CD8-positive, alpha-beta T cell (primary cell): ENCODE measurements at regions of chr4 and their contacts with region 1.

Region 1: GRCh38 chr4:56799824-56800756 is 21.4 kb downstream of the SPINK2 start:
- DNase-seq: peak; percentile 66 to 91 (median 82)
- ATAC-seq: peak; percentile 98
- H3K4me3 ChIP-seq: peak overlapping the region; percentile 53 to 78
- H3K4me3 Mint-ChIP-seq: peak overlapping the region; percentile 94
- H3K27ac ChIP-seq: peak overlapping the region; percentile 43 to 76
- H3K27ac Mint-ChIP-seq: peak overlapping the region; percentile 90
- H3K4me1 ChIP-seq: peaks cover 14% of the 10 kb centered on the region
- H3K4me1 Mint-ChIP-seq: peaks cover 23% of the 10 kb centered on the region
- H3K27me3 ChIP-seq: no peaks in the 10 kb centered on the region
- H3K27me3 Mint-ChIP-seq: no peaks in the 10 kb centered on the region
- CTCF ChIP-seq: peak; percentile 83

Region 2: DNA sequence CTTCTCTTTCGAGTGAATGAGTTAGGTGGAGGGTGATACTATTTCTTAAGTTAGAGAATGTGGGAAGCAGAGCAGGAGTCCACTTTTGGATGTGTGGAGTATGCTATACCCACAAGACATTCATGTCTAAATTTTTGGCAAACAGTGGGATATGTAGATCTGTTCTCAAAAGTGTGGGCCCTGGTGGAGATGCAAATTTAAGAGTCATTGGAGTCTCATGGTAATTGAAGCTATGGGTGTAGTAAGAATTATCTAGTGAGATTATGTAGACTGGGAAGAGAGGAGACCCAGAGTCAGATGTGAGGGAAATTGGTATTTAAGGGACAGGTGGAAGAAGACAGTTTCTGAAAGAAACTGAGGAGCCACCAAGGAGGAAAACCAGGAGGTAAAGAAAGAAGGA is 844.4 kb before region 1 on chr4:
- CTCF ChIA-PET with region 1: no interaction called
- POLR2A ChIA-PET with region 1: no interaction called
- intact Hi-C with region 1: no loop called
- DNase-seq: no peak
- ATAC-seq: no peak
- H3K4me3 ChIP-seq: no peak overlapping the region
- H3K4me3 Mint-ChIP-seq: no peak overlapping the region
- H3K27ac ChIP-seq: no peak overlapping the region
- H3K27ac Mint-ChIP-seq: peak overlapping the region; percentile 1
- H3K4me1 ChIP-seq: no peaks in the 10 kb centered on the region
- H3K4me1 Mint-ChIP-seq: peaks cover 11% of the 10 kb centered on the region
- H3K27me3 ChIP-seq: no peaks in the 10 kb centered on the region
- H3K27me3 Mint-ChIP-seq: no peaks in the 10 kb centered on the region
- CTCF ChIP-seq: no peak

Region 3: DNA sequence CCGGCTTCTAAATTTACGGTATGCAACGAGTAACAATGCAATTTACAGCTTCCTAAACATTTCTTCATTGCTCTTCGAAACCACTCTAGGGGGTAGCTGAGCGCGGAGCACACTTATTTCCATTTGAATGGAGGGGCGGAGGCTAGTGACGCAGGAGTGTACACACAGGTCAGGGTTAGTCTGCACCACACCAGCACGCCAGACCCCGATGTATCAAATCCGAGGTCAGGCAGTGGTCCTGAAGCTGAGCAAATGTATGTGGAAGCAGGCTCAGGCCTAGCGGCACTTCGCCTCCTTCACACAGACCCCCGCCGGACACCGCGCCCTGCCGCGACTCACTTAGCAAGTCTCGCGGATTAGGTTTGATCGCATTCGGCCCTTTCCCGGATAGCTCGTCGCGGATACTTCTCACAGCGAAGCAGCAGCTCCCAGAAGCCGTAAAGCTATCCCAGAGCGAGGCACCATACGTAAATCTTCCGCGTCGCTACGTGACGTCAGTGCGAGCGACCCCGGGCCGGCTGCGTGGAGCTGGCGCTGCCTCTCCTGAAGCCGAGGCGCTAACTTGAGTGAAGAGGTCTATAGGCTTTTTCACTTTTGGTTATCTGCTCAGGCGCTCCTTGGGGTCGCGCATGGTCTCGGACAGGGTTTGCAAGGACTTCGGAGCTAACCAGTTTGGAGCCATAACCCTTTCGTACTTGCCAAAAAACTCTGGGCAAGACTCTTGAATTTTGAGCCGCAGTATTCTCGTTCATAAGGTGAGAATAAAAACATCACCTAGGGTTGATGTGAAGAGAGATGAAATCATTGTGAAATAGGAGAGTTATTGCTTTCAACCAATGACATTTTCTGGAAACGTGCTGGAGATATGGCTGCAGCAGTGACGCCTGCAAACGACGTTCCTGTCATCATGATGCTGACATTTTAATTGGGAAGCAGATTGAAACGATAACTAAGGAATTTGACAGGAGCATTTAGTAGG is 412.8 kb before region 1 on chr4 and contains the start of gene AASDH:
- CTCF ChIA-PET with region 1: interaction called, 3 read pairs
- POLR2A ChIA-PET with region 1: no interaction called
- intact Hi-C with region 1: loop called in 1 of 2 experiments (anchors 1 kb)
- DNase-seq: peak; percentile 91 to 99 (median 96)
- ATAC-seq: peak; percentile 88
- H3K4me3 ChIP-seq: peak within 1 kb of the TSS; percentile 79 to 82
- H3K4me3 Mint-ChIP-seq: peak within 1 kb of the TSS; percentile 97
- H3K27ac ChIP-seq: peak within 1 kb of the TSS; percentile 93 to 94
- H3K27ac Mint-ChIP-seq: peak within 1 kb of the TSS; percentile 99
- H3K4me1 ChIP-seq: peaks cover 21% of the 10 kb centered on the region
- H3K4me1 Mint-ChIP-seq: peaks cover 46% of the 10 kb centered on the region
- H3K27me3 ChIP-seq: no peaks in the 10 kb centered on the region
- H3K27me3 Mint-ChIP-seq: no peaks in the 10 kb centered on the region
- CTCF ChIP-seq: no peak
- total RNA-seq, gene AASDH: 9.1 to 9.8 TPM

Region 4: GRCh38 chr4:56467284-56468096 is 332.6 kb before region 1 on chr4 and contains the start of gene SRP72:
- CTCF ChIA-PET with region 1: interaction called, 3 read pairs
- POLR2A ChIA-PET with region 1: no interaction called
- intact Hi-C with region 1: loop called in 1 of 2 experiments (anchors 1 kb)
- DNase-seq: peak; percentile 81 to 95 (median 90)
- ATAC-seq: peak; percentile 96
- H3K4me3 ChIP-seq: peak within 1 kb of the TSS; percentile 63 to 98
- H3K4me3 Mint-ChIP-seq: peak within 1 kb of the TSS; percentile 100
- H3K27ac ChIP-seq: peak within 1 kb of the TSS; percentile 69 to 92
- H3K27ac Mint-ChIP-seq: peak within 1 kb of the TSS; percentile 100
- H3K4me1 ChIP-seq: peaks cover 44% of the 10 kb centered on the region
- H3K4me1 Mint-ChIP-seq: peaks cover 60% of the 10 kb centered on the region
- H3K27me3 ChIP-seq: no peaks in the 10 kb centered on the region
- H3K27me3 Mint-ChIP-seq: no peaks in the 10 kb centered on the region
- CTCF ChIP-seq: no peak
- total RNA-seq, gene SRP72: 142 to 148 TPM

Region 5: DNA sequence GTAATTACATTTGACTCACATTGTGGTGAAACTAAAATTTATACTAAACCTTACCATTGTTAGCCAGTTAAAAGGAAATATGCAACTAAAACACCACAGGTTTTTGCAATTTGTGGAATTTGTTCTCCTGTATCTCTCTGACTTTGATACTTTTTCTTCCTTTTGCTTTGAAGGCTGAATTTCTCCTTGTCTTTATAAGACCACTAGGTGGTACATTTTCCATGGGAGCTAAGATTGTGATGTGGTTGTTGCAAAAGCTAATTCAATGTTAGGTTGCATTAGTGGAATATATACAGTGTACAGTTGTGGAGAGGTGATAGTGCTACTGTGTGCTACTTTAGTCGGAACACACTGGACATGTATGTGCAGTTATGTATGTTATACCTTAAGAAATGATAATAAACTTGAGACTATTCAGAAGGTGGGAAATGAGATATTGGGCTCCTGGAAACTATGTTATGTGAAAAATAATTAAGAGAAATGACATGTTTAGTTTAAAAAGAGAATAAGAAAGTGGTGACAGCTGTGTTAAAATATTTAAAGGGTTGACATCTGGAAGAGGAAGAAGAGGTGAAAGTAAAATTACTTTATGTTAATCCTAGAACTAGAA is 224.2 kb before region 1 on chr4:
- CTCF ChIA-PET with region 1: interaction called, 50 read pairs
- POLR2A ChIA-PET with region 1: interaction called, 4 read pairs
- intact Hi-C with region 1: loop called (anchors 1 kb)
- DNase-seq: peak in 2 of 9 experiments; percentile 35 to 52
- ATAC-seq: peak; percentile 36
- H3K4me3 ChIP-seq: no peak overlapping the region
- H3K4me3 Mint-ChIP-seq: no peak overlapping the region
- H3K27ac ChIP-seq: no peak overlapping the region
- H3K27ac Mint-ChIP-seq: no peak overlapping the region
- H3K4me1 ChIP-seq: no peaks in the 10 kb centered on the region
- H3K4me1 Mint-ChIP-seq: no peaks in the 10 kb centered on the region
- H3K27me3 ChIP-seq: no peaks in the 10 kb centered on the region
- H3K27me3 Mint-ChIP-seq: peaks cover 2% of the 10 kb centered on the region
- CTCF ChIP-seq: peak; percentile 15

Region 6: DNA sequence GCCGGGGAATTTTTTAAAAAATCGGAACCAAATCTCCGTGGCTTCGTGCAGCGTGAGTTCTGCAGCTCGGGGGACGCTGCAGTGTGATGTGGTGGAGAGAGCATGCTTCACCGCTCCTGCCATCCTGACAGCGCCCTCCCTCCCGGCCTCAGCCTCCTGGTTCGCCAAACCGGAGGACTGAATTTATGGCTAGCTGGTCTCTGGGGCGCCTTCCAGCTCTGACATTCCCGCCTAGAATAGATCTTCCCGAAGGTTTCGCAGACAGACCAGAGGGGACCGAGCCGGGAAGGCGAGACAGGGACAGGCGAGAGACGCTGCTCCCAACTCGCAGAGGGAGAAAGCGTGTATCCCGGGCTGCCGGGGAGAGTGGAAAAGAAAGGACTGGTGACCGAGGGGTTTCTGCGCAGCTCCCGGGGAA is 144.9 kb before region 1 on chr4:
- CTCF ChIA-PET with region 1: interaction called, 9 read pairs
- POLR2A ChIA-PET with region 1: no interaction called
- intact Hi-C with region 1: loop called in 1 of 2 experiments (anchors 2 kb)
- DNase-seq: peak in 5 of 9 experiments; percentile 17 to 62 (median 43)
- ATAC-seq: no peak
- H3K4me3 ChIP-seq: peak overlapping the region; percentile 61 to 78
- H3K4me3 Mint-ChIP-seq: peak overlapping the region; percentile 90
- H3K27ac ChIP-seq: peak overlapping the region in 1 of 2 experiments; percentile 73
- H3K27ac Mint-ChIP-seq: peak overlapping the region; percentile 41
- H3K4me1 ChIP-seq: peaks cover 28% of the 10 kb centered on the region
- H3K4me1 Mint-ChIP-seq: peaks cover 56% of the 10 kb centered on the region
- H3K27me3 ChIP-seq: no peaks in the 10 kb centered on the region
- H3K27me3 Mint-ChIP-seq: peaks cover 10% of the 10 kb centered on the region
- CTCF ChIP-seq: no peak

Region 7: GRCh38 chr4:56674984-56675383 is 125.1 kb before region 1 on chr4:
- CTCF ChIA-PET with region 1: interaction called, 6 read pairs
- POLR2A ChIA-PET with region 1: no interaction called
- intact Hi-C with region 1: loop called in 1 of 2 experiments (anchors 10 kb)
- DNase-seq: no peak
- ATAC-seq: no peak
- H3K4me3 ChIP-seq: no peak overlapping the region
- H3K4me3 Mint-ChIP-seq: no peak overlapping the region
- H3K27ac ChIP-seq: no peak overlapping the region
- H3K27ac Mint-ChIP-seq: no peak overlapping the region
- H3K4me1 ChIP-seq: no peaks in the 10 kb centered on the region
- H3K4me1 Mint-ChIP-seq: no peaks in the 10 kb centered on the region
- H3K27me3 ChIP-seq: no peaks in the 10 kb centered on the region
- H3K27me3 Mint-ChIP-seq: no peaks in the 10 kb centered on the region
- CTCF ChIP-seq: no peak

Region 8: DNA sequence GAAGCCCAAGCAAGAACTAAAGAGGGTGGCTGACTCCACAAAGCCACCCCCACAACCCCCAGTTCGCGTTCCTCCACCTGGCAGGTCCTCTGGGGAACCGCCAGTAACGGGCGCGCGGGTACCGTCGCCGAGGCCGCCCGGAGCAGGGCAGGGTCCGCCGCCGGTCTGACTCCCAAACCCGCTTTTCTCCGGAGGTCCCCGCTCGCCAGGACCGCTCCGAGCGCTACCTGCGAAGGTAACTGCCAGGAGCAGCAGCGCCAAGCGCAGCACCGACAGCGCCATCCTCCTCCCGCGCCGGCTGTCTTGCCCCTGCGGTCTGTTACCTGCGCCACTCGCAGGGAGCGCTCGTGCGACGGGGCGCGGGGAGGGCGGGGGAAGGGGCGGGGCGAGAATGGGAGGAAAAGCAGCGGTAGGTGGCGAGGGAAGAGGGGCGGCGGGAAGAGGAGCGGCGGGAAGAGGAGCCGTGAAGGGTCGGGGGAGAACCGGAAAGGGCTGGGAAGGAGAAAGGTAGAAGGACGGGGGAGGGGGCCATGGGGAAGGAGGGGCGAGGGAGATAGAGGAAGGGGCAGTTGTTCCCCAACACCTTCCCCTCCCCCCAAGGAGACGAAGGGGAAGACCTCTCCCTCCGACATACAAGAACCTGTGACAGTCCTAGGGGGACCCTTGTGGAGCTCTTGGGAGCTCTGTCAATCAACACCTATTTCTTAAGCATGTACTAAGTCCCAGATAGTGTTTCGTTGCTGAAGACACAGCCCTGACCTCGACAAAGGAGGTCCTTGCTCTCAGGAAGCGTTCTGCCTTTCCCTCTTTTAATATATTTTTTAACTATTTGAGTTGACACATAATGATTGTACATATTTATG is 21.5 kb after region 1 on chr4 and contains the start of gene SPINK2:
- CTCF ChIA-PET with region 1: interaction called, 11 read pairs
- POLR2A ChIA-PET with region 1: interaction called, 3 read pairs
- intact Hi-C with region 1: loop called in 1 of 2 experiments (anchors 1 kb)
- DNase-seq: peak; percentile 41 to 88 (median 76)
- ATAC-seq: peak; percentile 87
- H3K4me3 ChIP-seq: peak within 1 kb of the TSS; percentile 58 to 65
- H3K4me3 Mint-ChIP-seq: peak within 1 kb of the TSS; percentile 81
- H3K27ac ChIP-seq: peak within 1 kb of the TSS; percentile 36
- H3K27ac Mint-ChIP-seq: peak within 1 kb of the TSS; percentile 27
- H3K4me1 ChIP-seq: peaks cover 34% of the 10 kb centered on the region
- H3K4me1 Mint-ChIP-seq: peaks cover 36% of the 10 kb centered on the region
- H3K27me3 ChIP-seq: no peaks in the 10 kb centered on the region
- H3K27me3 Mint-ChIP-seq: no peaks in the 10 kb centered on the region
- CTCF ChIP-seq: no peak
- total RNA-seq, gene SPINK2: 2.6 to 4.4 TPM